ENCODE measurements at regions of chr11 and their contacts with region 1.

Region 1: GRCh38 chr11:132941024-132941646 is 591.2 kb downstream of the OPCML start:
- DNase-seq: peak in 2 of 10 donors; percentile 44 to 69
- H3K4me3 ChIP-seq: peak overlapping the region in 15 of 59 donors; percentile 9 to 70 (median 28)
- H3K27ac ChIP-seq: peak overlapping the region in 34 of 59 donors; percentile 1 to 90 (median 38)
- H3K27me3 ChIP-seq: peaks cover 0 to 2% (median 0%) of the 10 kb centered on the region in 45 donors
- CTCF ChIP-seq: peak; percentile 81 to 97 (median 90)

Region 2: GRCh38 chr11:132278801-132279574 is 662.1 kb before region 1 on chr11:
- intact Hi-C with region 1: loop called in 1 of 2 experiments (anchors 5 kb)
- DNase-seq: no peak
- H3K4me3 ChIP-seq: no peak overlapping the region
- H3K27ac ChIP-seq: no peak overlapping the region
- H3K27me3 ChIP-seq: no peaks in the 10 kb centered on the region
- CTCF ChIP-seq: peak in 46 of 56 donors; percentile 3 to 66 (median 44)

Region 3: GRCh38 chr11:132992838-132993631 is 51.9 kb after region 1 on chr11:
- intact Hi-C with region 1: loop called (anchors 1 to 5 kb)
- DNase-seq: peak in 2 of 10 donors; percentile 22 to 40
- H3K4me3 ChIP-seq: peak overlapping the region in 32 of 59 donors; percentile 0 to 63 (median 50)
- H3K27ac ChIP-seq: peak overlapping the region in 40 of 59 donors; percentile 6 to 78 (median 44)
- H3K27me3 ChIP-seq: peaks cover 0 to 25% (median 3%) of the 10 kb centered on the region in 45 donors
- CTCF ChIP-seq: peak in 54 of 56 donors; percentile 14 to 78 (median 50)

Region 4: GRCh38 chr11:133064152-133064877 is 123.2 kb after region 1 on chr11:
- intact Hi-C with region 1: loop called in 1 of 2 experiments (anchors 5 kb)
- DNase-seq: peak; percentile 46 to 84 (median 73)
- H3K4me3 ChIP-seq: peak overlapping the region in 58 of 59 donors; percentile 10 to 72 (median 53)
- H3K27ac ChIP-seq: peak overlapping the region in 26 of 59 donors; percentile 4 to 85 (median 45)
- H3K27me3 ChIP-seq: peaks cover 0 to 6% (median 0%) of the 10 kb centered on the region in 45 donors
- CTCF ChIP-seq: peak in 54 of 56 donors; percentile 23 to 84 (median 68)

Measured in dorsolateral prefrontal cortex (tissue), 120 donors.